ENCODE measurements at regions of chr5 and their contacts with region 1.

Region 1: DNA sequence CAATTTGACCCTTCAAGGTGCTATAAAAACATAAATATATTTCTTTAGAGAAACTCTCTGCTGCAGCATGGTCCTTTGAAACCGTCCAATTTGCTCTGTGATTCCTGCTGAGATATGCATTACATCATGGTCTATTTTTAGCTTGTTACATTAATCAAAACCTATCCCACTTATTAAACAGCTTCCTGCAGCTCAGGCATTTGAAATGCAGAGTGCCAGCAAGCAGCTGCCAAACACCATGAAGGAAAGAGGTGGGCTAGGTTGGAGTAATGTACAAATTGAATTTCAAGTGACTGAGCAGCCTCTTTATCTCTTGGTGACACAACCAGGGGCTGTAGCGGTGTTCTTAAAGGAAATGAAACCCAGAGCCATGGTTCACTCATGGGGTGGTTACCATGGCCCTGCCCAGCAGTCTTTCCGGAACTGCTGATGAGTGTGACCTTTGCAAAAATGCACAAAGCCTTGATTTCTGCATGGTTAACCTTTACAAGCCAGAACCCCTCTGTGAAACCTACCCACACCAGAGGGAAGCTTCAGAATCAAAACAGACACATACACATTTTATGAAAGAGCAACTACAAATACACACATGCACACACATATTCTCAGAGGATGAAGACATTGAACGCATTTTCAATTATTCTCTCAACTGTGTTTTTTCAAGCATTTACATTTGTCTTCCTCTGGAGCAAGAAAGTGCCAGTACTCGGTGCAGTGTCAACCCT is 155.8 kb upstream of the ZNF608 start:
- DNase-seq: no peak
- ATAC-seq: peak in 3 of 4 donors; percentile 13 to 53 (median 50)
- H3K4me3 ChIP-seq: no peak overlapping the region
- H3K27ac ChIP-seq: peak overlapping the region; percentile 53
- H3K4me1 ChIP-seq: peaks cover 41% of the 10 kb centered on the region
- H3K27me3 ChIP-seq: no peaks in the 10 kb centered on the region
- CTCF ChIP-seq: no peak

Region 2: DNA sequence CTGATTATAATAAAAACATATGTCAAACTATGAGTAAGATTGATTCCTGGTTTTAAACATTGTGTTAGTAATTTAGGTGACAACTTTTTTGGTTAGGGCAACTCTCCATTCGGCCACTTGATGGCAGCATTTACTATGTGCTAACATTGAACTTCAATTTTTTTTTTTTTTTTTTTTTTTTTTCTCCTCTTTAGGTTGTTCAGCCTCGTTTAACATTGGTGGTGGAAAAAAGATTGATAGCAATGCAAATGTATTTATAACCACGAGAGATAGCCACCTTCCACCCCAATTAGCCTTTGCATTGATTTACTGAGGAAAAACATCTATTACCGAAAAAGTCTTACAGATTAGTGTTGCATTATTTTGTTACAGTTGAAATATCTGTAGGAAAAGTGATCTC is 1231.2 kb before region 1 on chr5:
- intact Hi-C with region 1: loop called in 1 of 2 experiments (anchors 10 kb)
- DNase-seq: peak in 1 of 2 donors; percentile 19
- ATAC-seq: peak in 2 of 4 donors; percentile 66 to 74
- H3K4me3 ChIP-seq: no peak overlapping the region
- H3K27ac ChIP-seq: no peak overlapping the region
- H3K4me1 ChIP-seq: peaks cover 23% of the 10 kb centered on the region
- H3K27me3 ChIP-seq: no peaks in the 10 kb centered on the region
- CTCF ChIP-seq: peak; percentile 90

Region 3: GRCh38 chr5:124649491-124650146 is 252.6 kb before region 1 on chr5:
- intact Hi-C with region 1: loop called (anchors 10 kb)
- DNase-seq: peak; percentile 63 to 84
- ATAC-seq: no peak
- H3K4me3 ChIP-seq: peak overlapping the region; percentile 23
- H3K27ac ChIP-seq: peak overlapping the region; percentile 81
- H3K4me1 ChIP-seq: peaks cover 27% of the 10 kb centered on the region
- H3K27me3 ChIP-seq: no peaks in the 10 kb centered on the region
- CTCF ChIP-seq: no peak

Region 4: GRCh38 chr5:124706729-124707361 is 195.4 kb before region 1 on chr5:
- intact Hi-C with region 1: no loop called
- DNase-seq: no peak
- ATAC-seq: peak; percentile 29 to 55 (median 36)
- H3K4me3 ChIP-seq: no peak overlapping the region
- H3K27ac ChIP-seq: no peak overlapping the region
- H3K4me1 ChIP-seq: peaks cover 43% of the 10 kb centered on the region
- H3K27me3 ChIP-seq: no peaks in the 10 kb centered on the region
- CTCF ChIP-seq: no peak

Region 5: GRCh38 chr5:124748687-124749594 is 153.3 kb before region 1 on chr5:
- intact Hi-C with region 1: loop called (anchors 2 to 10 kb)
- DNase-seq: peak; percentile 47 to 66
- ATAC-seq: peak; percentile 79 to 87 (median 82)
- H3K4me3 ChIP-seq: peak overlapping the region; percentile 83
- H3K27ac ChIP-seq: peak overlapping the region; percentile 95
- H3K4me1 ChIP-seq: peaks cover 8% of the 10 kb centered on the region
- H3K27me3 ChIP-seq: no peaks in the 10 kb centered on the region
- CTCF ChIP-seq: no peak

Region 6: DNA sequence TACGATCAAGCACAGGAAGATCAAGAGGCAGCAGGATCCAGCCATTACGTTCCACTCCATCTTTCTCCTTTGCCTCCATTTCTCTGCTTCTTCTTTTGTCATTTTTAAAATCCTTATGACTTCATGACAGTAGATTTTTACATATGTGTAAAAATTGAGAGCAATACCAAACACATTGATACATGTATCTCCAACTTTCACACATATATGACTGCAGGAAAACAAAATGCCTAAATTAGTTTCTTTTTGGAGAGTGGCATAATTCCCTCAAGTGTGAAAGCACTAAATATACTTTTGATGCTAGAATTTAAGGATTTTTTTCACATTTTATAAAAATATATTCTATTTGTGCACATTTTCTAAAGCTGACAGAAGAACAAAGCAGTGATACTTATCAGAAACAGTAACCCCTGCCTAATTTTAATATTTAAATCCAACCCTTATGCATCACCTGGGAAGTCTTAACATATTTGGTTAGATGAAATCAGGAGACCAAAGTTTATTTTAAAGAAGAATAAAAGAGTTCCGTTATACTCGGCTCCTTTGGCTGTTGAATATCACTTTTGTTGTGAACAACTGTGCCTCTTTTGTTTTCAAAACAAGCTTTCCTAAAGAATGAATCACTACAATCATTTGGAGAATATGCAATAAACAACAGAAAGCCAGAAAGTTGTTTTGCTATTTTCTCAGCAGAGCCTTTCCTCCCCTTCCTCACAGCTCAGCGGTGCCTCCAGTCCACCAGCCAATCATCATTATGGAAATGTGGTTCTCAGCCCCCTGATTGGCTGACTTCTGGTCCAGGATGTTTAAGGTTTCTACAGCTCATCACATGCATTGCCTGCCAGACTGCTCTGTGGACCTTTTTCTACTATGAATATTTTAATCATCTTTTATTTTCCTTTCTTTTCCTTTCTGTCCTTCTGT is 147.0 kb before region 1 on chr5:
- intact Hi-C with region 1: loop called in 1 of 2 experiments (anchors 10 kb)
- DNase-seq: no peak
- ATAC-seq: peak in 3 of 4 donors; percentile 52 to 86 (median 75)
- H3K4me3 ChIP-seq: peak overlapping the region; percentile 50
- H3K27ac ChIP-seq: peak overlapping the region; percentile 38
- H3K4me1 ChIP-seq: peaks cover 16% of the 10 kb centered on the region
- H3K27me3 ChIP-seq: no peaks in the 10 kb centered on the region
- CTCF ChIP-seq: no peak

Region 7: DNA sequence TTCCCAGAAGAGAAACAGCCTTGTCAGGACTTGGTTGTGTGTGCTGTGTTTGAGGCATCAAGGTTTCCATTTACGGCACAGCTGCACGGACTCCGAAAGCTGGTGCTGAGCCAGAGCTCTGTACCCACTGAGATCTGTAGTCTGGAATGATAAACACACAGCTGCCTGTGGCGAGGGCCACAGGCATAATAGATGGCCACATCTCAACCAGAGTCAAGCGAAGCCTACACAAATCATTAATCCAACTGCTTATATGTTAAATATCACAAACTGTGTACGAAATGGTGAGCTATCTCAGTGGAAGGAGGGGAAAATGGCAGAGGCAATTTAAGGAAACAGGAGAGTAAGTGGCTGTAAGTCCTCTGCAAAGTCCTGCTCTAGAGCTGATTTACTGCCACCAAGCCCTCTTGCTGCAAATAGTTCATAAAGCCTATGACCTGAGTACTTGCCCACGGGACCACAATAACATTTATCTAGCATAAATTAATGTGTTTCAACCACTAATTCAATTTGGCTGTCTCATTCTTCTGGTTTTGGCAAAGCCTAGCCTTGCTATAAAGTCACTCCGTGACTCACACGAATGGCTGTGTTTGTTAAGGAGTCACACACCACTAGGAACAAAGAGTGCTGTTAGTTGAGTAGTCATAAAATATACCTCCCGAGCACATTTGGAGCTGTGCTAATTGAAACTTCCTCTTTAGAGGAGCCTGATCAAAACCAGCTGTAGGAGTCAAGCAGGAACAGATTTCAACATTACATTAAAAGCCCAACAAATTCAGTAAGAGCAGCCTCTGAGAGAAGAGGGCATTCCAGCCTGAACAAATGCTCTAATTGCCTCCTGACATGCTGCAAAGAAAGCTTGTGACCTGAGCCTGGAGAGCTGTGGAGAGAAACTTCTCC is 582.7 kb after region 1 on chr5:
- intact Hi-C with region 1: loop called in 1 of 2 experiments (anchors 10 kb)
- DNase-seq: peak; percentile 61 to 86
- ATAC-seq: peak; percentile 93 to 95 (median 94)
- H3K4me3 ChIP-seq: peak overlapping the region; percentile 32
- H3K27ac ChIP-seq: peak overlapping the region; percentile 85
- H3K4me1 ChIP-seq: peaks cover 19% of the 10 kb centered on the region
- H3K27me3 ChIP-seq: no peaks in the 10 kb centered on the region
- CTCF ChIP-seq: no peak